ENCODE measurements at regions of chr3 and their contacts with region 1.

Region 1: GRCh38 chr3:129490242-129491045 is 38.0 kb upstream of the RHO start:
- DNase-seq: peak; percentile 75
- ATAC-seq: peak; percentile 90
- H3K4me3 ChIP-seq: no peak overlapping the region
- H3K27ac ChIP-seq: peak overlapping the region; percentile 59
- H3K4me1 ChIP-seq: peaks cover 34% of the 10 kb centered on the region
- H3K27me3 ChIP-seq: no peaks in the 10 kb centered on the region
- CTCF ChIP-seq: peak; percentile 84

Region 2: GRCh38 chr3:129934234-129935123 is 444.0 kb after region 1 on chr3:
- CTCF ChIA-PET with region 1: no interaction called
- POLR2A ChIA-PET with region 1: no interaction called
- intact Hi-C with region 1: loop called (anchors 2 kb)
- DNase-seq: peak; percentile 42
- ATAC-seq: peak; percentile 74
- H3K4me3 ChIP-seq: peak overlapping the region; percentile 64
- H3K27ac ChIP-seq: no peak overlapping the region
- H3K4me1 ChIP-seq: no peaks in the 10 kb centered on the region
- H3K27me3 ChIP-seq: no peaks in the 10 kb centered on the region
- CTCF ChIP-seq: peak; percentile 89

Measured in PC-3 (cell line).